HEK293 (cell line): ENCODE measurements at regions of chr9 and their contacts with region 1.

Region 1: DNA sequence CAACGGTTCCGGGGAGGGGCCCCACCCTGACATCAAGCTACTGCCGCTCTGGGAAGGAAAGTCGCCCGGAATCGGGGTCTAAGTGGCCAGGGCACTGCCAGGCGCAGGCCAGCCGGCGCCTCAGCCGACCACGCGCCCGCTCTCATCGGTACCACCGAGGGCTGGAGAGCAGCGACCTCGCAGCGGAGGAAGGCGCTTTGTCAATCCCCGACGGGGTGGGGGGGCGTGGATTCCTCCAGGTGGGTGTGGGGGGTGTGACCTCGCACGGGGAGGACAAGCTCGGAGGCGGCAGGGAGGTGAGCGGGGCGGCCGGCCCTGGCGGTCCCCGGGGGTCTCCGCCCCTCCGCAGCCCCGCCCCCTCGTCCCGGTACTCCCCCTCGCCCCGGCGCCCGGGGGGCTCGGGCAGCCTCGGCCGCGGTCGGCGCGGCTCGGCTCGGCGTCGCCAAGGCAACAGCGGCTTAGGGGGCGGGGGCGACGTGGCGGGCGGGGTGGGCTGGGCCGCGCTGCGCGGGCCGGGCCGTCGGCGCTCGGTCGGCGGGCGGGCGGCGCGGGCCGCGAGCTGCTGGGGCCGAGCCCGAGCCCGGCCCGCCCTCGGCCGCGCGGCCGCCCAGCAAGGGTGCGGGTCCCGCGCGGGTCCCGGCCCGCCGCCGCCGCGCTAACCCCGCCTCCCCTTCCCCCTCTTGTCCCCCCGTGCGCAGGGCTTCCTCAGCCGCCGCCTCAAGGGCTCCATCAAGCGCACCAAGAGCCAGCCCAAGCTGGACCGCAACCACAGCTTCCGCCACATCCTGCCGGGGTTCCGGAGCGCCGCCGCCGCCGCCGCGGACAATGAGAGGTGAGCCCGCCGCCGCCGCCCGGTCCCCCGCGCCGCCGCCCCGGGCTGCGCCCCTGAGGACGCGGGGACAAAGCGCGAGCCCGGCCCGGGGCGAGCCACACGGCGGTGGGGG is 47.5 kb downstream of the DAB2IP start:
- H3K4me3 ChIP-seq: peak overlapping the region; percentile 57
- H3K27ac ChIP-seq: peak overlapping the region; percentile 46; the same call in 1 of the 2 replicates
- H3K4me1 ChIP-seq: no peaks in the 10 kb centered on the region; the same call in 1 of the 2 replicates
- CTCF ChIP-seq: no peak

Region 2: DNA sequence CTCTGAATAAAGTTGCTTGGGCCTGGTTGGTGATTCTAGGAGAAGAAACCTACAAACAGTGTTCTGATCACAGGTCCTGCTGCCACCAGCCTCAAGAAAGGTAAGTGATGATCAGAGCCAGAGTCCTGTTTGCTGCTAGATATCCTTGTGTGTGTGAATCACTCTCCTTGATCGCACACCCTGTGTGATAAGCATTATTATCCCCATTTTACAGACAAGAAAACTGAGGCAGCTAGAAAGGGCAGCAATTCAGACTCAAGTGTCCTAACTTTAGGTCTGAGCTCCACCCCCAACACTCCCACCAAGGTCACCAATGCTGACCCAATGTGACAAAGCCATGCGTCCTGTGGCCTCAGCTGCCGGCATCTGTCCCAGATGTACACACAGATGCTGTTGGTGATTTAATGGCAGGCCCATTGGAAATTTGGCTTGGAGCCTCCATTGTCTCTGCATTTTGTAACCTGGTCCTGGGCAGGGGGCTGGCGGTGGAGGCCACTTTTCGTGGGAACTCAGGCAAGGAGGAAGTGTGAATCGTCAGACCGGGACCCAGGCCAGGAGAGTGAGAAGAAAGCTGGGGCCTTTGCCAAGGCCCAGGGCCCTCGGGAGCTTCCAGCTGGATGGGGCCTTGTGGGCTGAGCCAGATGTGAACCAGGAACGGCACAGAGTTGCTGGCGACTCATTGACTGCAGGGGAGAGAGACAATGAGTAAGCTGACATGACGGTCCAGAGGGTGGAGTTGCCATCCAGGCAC is 169.5 kb before region 1 on chr9:
- CTCF ChIA-PET with region 1: no interaction called
- POLR2A ChIA-PET with region 1: no interaction called
- H3K4me3 ChIP-seq: no peak overlapping the region
- H3K27ac ChIP-seq: no peak overlapping the region
- H3K4me1 ChIP-seq: no peaks in the 10 kb centered on the region
- CTCF ChIP-seq: no peak

Region 3: GRCh38 chr9:121598965-121599871 is 99.7 kb before region 1 on chr9:
- CTCF ChIA-PET with region 1: interaction called, 15 read pairs
- POLR2A ChIA-PET with region 1: no interaction called
- H3K4me3 ChIP-seq: peak overlapping the region; percentile 74
- H3K27ac ChIP-seq: peak overlapping the region; percentile 60; the same call in 1 of the 2 replicates
- H3K4me1 ChIP-seq: no peaks in the 10 kb centered on the region
- CTCF ChIP-seq: no peak; the same call in 1 of the 2 replicates

Region 4: GRCh38 chr9:121640076-121640475 is 58.8 kb before region 1 on chr9:
- CTCF ChIA-PET with region 1: interaction called, 18 read pairs
- POLR2A ChIA-PET with region 1: no interaction called
- H3K4me3 ChIP-seq: no peak overlapping the region
- H3K27ac ChIP-seq: no peak overlapping the region
- H3K4me1 ChIP-seq: no peaks in the 10 kb centered on the region
- CTCF ChIP-seq: 0 out of 2 replicates have a peak, but pooled peaks have one; percentile 18

Region 5: GRCh38 chr9:121656931-121657470 is 41.9 kb before region 1 on chr9:
- CTCF ChIA-PET with region 1: interaction called, 13 read pairs
- POLR2A ChIA-PET with region 1: interaction called, 3 read pairs
- H3K4me3 ChIP-seq: no peak overlapping the region
- H3K27ac ChIP-seq: no peak overlapping the region
- H3K4me1 ChIP-seq: peaks cover 6% of the 10 kb centered on the region
- CTCF ChIP-seq: no peak

Region 6: GRCh38 chr9:121721770-121722169 is 22.9 kb after region 1 on chr9:
- CTCF ChIA-PET with region 1: no interaction called
- POLR2A ChIA-PET with region 1: no interaction called
- H3K4me3 ChIP-seq: no peak overlapping the region
- H3K27ac ChIP-seq: no peak overlapping the region
- H3K4me1 ChIP-seq: no peaks in the 10 kb centered on the region
- CTCF ChIP-seq: no peak

Region 7: DNA sequence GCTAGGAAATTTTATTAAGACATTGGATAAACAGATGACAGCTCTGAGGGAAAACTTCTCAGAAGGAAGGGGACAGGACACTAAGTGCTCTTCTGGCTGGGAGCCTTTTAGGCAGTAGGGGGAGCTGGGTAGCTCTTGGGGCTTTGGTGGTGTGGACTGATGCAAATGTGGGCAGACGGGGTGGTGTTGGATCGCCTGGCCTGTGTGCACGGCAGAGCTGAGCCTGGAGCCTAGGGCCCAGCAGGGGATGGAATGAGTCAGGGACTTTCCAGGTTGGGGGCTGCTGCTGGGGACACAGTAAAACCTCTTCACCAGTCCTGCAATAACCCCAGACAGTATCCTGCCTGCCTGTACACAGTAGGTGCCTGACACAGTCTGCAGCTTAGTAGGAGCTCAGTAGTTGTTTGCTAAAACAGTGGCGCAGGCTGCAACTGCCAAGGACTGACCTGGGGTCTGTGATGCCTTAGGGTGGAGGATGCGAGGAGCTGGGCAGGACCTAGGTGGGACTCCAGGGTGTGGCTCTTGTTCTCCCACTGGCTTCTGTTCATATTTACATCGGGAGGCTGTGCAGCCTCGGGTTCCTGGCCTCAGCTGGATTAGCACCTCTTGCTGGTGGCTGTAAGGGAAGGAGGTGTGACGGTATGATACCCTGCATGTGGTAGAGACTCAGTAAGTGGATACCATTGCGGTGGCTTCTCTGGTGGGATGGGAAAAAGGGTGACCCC is 36.3 kb after region 1 on chr9:
- CTCF ChIA-PET with region 1: interaction called, 12 read pairs
- POLR2A ChIA-PET with region 1: no interaction called
- H3K4me3 ChIP-seq: no peak overlapping the region
- H3K27ac ChIP-seq: no peak overlapping the region
- H3K4me1 ChIP-seq: no peaks in the 10 kb centered on the region; the same call in 1 of the 2 replicates
- CTCF ChIP-seq: peak; percentile 44; the same call in 1 of the 2 replicates